OCI-LY7 (cell line): ENCODE measurements at regions of chrX and their contacts with region 1.

Region 1: GRCh38 chrX:140180585-140180984 is 215.3 kb upstream of the CXorf66 start:
- DNase-seq: no peak
- H3K4me3 ChIP-seq: no peak overlapping the region
- H3K27ac ChIP-seq: no peak overlapping the region
- H3K4me1 ChIP-seq: no peaks in the 10 kb centered on the region
- CTCF ChIP-seq: no peak

Region 2: GRCh38 chrX:138964501-138964900 is 1216.1 kb before region 1 on chrX:
- CTCF ChIA-PET with region 1: no interaction called
- POLR2A ChIA-PET with region 1: no interaction called
- intact Hi-C with region 1: no loop called
- DNase-seq: no peak
- H3K4me3 ChIP-seq: no peak overlapping the region
- H3K27ac ChIP-seq: no peak overlapping the region
- H3K4me1 ChIP-seq: no peaks in the 10 kb centered on the region
- CTCF ChIP-seq: no peak

Region 3: DNA sequence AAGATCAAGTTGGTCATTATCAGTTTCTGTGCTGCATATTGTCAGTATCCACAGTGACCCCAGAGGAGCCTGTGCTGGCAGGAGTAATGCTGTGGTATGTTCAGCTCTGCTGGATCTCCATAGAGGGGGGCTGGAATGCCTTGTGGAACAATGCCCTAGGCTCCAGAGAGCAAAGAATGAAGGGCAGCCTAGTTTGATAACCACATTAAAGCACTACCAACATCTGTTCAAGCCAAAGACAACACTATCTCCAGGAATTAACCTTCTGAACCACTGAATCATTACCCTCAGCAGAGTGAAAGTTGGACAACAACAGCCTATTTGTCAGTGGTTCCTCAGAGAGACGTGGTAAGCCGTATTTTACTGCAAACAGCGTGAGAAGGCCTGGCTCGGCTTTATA is 23.0 kb before region 1 on chrX:
- CTCF ChIA-PET with region 1: no interaction called
- POLR2A ChIA-PET with region 1: no interaction called
- intact Hi-C with region 1: loop called (anchors 1 kb)
- DNase-seq: no peak
- H3K4me3 ChIP-seq: no peak overlapping the region
- H3K27ac ChIP-seq: no peak overlapping the region
- H3K4me1 ChIP-seq: no peaks in the 10 kb centered on the region
- CTCF ChIP-seq: no peak